Activated CD4-positive, alpha-beta memory T cell treated with anti-CD3 and anti-CD28 coated beads, Interleukin-2, amount 10 ng/mL, durations not matched to agents 7 days and 5 days (primary cell): ENCODE measurements at regions of chr16 and their contacts with region 1.

Region 1: GRCh38 chr16:11051879-11052808 is 107.8 kb downstream of the CLEC16A start:
- DNase-seq: peak; percentile 92
- H3K4me3 Mint-ChIP-seq: peak overlapping the region; percentile 51
- H3K27ac Mint-ChIP-seq: peak overlapping the region; percentile 97
- H3K4me1 Mint-ChIP-seq: peaks cover 95% of the 10 kb centered on the region
- H3K27me3 Mint-ChIP-seq: no peaks in the 10 kb centered on the region

Region 2: GRCh38 chr16:10971560-10971961 is 80.6 kb before region 1 on chr16:
- CTCF ChIA-PET with region 1: interaction called, 13 read pairs
- POLR2A ChIA-PET with region 1: interaction called, 16 read pairs
- DNase-seq: peak; percentile 50
- H3K4me3 Mint-ChIP-seq: no peak overlapping the region
- H3K27ac Mint-ChIP-seq: peak overlapping the region; percentile 82
- H3K4me1 Mint-ChIP-seq: peaks cover 74% of the 10 kb centered on the region
- H3K27me3 Mint-ChIP-seq: no peaks in the 10 kb centered on the region

Region 3: DNA sequence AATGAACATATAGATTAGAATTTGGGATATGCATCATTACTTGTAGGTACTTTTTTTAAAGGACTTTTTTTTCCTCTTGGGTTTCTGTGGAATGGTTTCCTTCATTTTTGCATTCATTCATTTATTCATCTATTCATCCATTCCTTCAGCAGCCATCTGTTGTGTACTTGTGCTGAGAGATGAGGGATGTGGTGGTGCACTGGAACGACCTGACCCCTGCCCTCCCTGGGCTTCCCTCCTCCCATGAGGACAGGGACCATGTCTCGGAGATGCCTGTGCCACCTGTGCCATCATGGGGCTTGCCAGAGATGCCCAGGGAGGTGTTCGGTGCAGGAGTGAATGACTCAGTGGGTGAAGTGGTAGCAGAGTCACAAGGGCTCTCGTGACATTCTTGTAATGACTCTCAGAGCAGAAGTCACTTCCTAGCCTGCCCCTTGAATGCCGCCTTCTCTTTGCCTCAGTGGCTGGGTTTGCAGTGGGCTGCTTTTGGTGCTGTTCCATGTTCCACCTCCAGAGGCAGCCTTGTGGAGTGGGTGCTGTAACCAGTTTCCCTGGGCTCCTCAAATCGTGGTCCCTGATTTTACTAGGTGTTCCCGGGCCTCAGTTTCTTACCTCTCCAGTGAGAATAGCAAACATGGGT is 63.9 kb before region 1 on chr16:
- CTCF ChIA-PET with region 1: interaction called, 12 read pairs
- POLR2A ChIA-PET with region 1: interaction called, 31 read pairs
- DNase-seq: peak; percentile 85
- H3K4me3 Mint-ChIP-seq: peak overlapping the region; percentile 43
- H3K27ac Mint-ChIP-seq: peak overlapping the region; percentile 85
- H3K4me1 Mint-ChIP-seq: peaks cover 90% of the 10 kb centered on the region
- H3K27me3 Mint-ChIP-seq: no peaks in the 10 kb centered on the region

Region 4: GRCh38 chr16:11094072-11094856 is 42.1 kb after region 1 on chr16:
- CTCF ChIA-PET with region 1: interaction called, 6 read pairs
- POLR2A ChIA-PET with region 1: interaction called, 89 read pairs
- DNase-seq: peak; percentile 72
- H3K4me3 Mint-ChIP-seq: peak overlapping the region; percentile 36
- H3K27ac Mint-ChIP-seq: peak overlapping the region; percentile 93
- H3K4me1 Mint-ChIP-seq: peaks cover 86% of the 10 kb centered on the region
- H3K27me3 Mint-ChIP-seq: no peaks in the 10 kb centered on the region

Region 5: DNA sequence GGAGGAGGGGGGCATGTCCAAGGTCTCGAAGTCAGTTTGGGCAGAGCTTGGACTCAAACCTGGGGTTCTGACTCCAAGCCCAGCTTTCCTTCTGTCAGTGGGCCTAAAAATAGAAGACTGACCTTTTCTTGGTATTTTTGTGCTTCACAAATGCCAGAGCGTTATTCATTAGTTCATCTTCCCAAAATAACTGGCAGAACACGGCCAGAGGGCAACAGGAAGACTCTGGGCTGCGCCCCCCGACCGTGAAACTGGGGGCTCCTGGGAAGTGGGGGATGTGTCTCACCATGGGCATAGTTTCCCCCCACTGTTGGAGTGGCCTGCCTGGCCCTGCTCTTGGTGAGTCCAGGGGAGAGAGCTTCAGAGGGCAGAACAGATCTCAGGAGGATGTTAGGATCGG is 109.8 kb after region 1 on chr16:
- CTCF ChIA-PET with region 1: interaction called, 5 read pairs
- POLR2A ChIA-PET with region 1: interaction called, 22 read pairs
- DNase-seq: no peak
- H3K4me3 Mint-ChIP-seq: no peak overlapping the region
- H3K27ac Mint-ChIP-seq: peak overlapping the region; percentile 70
- H3K4me1 Mint-ChIP-seq: peaks cover 88% of the 10 kb centered on the region
- H3K27me3 Mint-ChIP-seq: no peaks in the 10 kb centered on the region

Region 6: GRCh38 chr16:11232852-11233726 is 180.9 kb after region 1 on chr16:
- CTCF ChIA-PET with region 1: interaction called, 4 read pairs
- POLR2A ChIA-PET with region 1: interaction called, 30 read pairs
- DNase-seq: peak; percentile 95
- H3K4me3 Mint-ChIP-seq: peak overlapping the region; percentile 66
- H3K27ac Mint-ChIP-seq: peak overlapping the region; percentile 98
- H3K4me1 Mint-ChIP-seq: peaks cover 86% of the 10 kb centered on the region
- H3K27me3 Mint-ChIP-seq: no peaks in the 10 kb centered on the region